Endothelial cell of umbilical vein (primary cell): ENCODE measurements at regions of chr21 and their contacts with region 1.

Region 1: GRCh38 chr21:33360881-33361602 is 36.3 kb downstream of the IFNAR1 start:
- DNase-seq: peak; percentile 77
- H3K4me3 ChIP-seq: no peak overlapping the region
- H3K27ac ChIP-seq: no peak overlapping the region
- H3K4me1 ChIP-seq: peaks cover 16% of the 10 kb centered on the region
- H3K27me3 ChIP-seq: no peaks in the 10 kb centered on the region
- CTCF ChIP-seq: peak; percentile 82 to 91
- POLR2A ChIP-seq: no peak

Region 2: GRCh38 chr21:33036430-33037162 is 324.4 kb before region 1 on chr21:
- CTCF ChIA-PET with region 1: no interaction called
- POLR2A ChIA-PET with region 1: no interaction called
- dilution Hi-C with region 1: no loop called
- intact Hi-C with region 1: no loop called
- DNase-seq: peak; percentile 79
- H3K4me3 ChIP-seq: no peak overlapping the region
- H3K27ac ChIP-seq: peak overlapping the region; percentile 48
- H3K4me1 ChIP-seq: peaks cover 15% of the 10 kb centered on the region
- H3K27me3 ChIP-seq: peaks cover 30 to 32% of the 10 kb centered on the region in 2 experiments
- CTCF ChIP-seq: no peak
- POLR2A ChIP-seq: no peak

Region 3: GRCh38 chr21:33207449-33208149 is 153.4 kb before region 1 on chr21:
- CTCF ChIA-PET with region 1: interaction called, 10 read pairs
- POLR2A ChIA-PET with region 1: no interaction called
- dilution Hi-C with region 1: no loop called
- intact Hi-C with region 1: no loop called
- DNase-seq: no peak
- H3K4me3 ChIP-seq: no peak overlapping the region
- H3K27ac ChIP-seq: no peak overlapping the region
- H3K4me1 ChIP-seq: no peaks in the 10 kb centered on the region
- H3K27me3 ChIP-seq: no peaks in the 10 kb centered on the region
- CTCF ChIP-seq: no peak
- POLR2A ChIP-seq: no peak

Region 4: GRCh38 chr21:33330726-33331125 is 30.3 kb before region 1 on chr21:
- CTCF ChIA-PET with region 1: interaction called, 29 read pairs
- POLR2A ChIA-PET with region 1: interaction called, 5 read pairs
- dilution Hi-C with region 1: no loop called
- intact Hi-C with region 1: loop called (anchors 1 kb)
- DNase-seq: no peak
- H3K4me3 ChIP-seq: no peak overlapping the region
- H3K27ac ChIP-seq: no peak overlapping the region
- H3K4me1 ChIP-seq: peaks cover 5% of the 10 kb centered on the region
- H3K27me3 ChIP-seq: no peaks in the 10 kb centered on the region
- CTCF ChIP-seq: no peak
- POLR2A ChIP-seq: no peak

Region 5: GRCh38 chr21:33374450-33375096 is 13.5 kb after region 1 on chr21:
- CTCF ChIA-PET with region 1: interaction called, 24 read pairs
- POLR2A ChIA-PET with region 1: no interaction called
- dilution Hi-C with region 1: no loop called
- intact Hi-C with region 1: no loop called
- DNase-seq: peak; percentile 84
- H3K4me3 ChIP-seq: no peak overlapping the region
- H3K27ac ChIP-seq: no peak overlapping the region
- H3K4me1 ChIP-seq: peaks cover 15% of the 10 kb centered on the region
- H3K27me3 ChIP-seq: no peaks in the 10 kb centered on the region
- CTCF ChIP-seq: peak; percentile 54 to 60
- POLR2A ChIP-seq: no peak

Region 6: GRCh38 chr21:33403779-33404585 is 42.9 kb after region 1 on chr21:
- CTCF ChIA-PET with region 1: interaction called, 10 read pairs
- POLR2A ChIA-PET with region 1: no interaction called
- dilution Hi-C with region 1: no loop called
- intact Hi-C with region 1: loop called (anchors 2 kb)
- DNase-seq: peak; percentile 44
- H3K4me3 ChIP-seq: peak overlapping the region; percentile 9 to 95 (median 49)
- H3K27ac ChIP-seq: no peak overlapping the region
- H3K4me1 ChIP-seq: peaks cover 7% of the 10 kb centered on the region
- H3K27me3 ChIP-seq: no peaks in the 10 kb centered on the region
- CTCF ChIP-seq: no peak
- POLR2A ChIP-seq: no peak

Region 7: DNA sequence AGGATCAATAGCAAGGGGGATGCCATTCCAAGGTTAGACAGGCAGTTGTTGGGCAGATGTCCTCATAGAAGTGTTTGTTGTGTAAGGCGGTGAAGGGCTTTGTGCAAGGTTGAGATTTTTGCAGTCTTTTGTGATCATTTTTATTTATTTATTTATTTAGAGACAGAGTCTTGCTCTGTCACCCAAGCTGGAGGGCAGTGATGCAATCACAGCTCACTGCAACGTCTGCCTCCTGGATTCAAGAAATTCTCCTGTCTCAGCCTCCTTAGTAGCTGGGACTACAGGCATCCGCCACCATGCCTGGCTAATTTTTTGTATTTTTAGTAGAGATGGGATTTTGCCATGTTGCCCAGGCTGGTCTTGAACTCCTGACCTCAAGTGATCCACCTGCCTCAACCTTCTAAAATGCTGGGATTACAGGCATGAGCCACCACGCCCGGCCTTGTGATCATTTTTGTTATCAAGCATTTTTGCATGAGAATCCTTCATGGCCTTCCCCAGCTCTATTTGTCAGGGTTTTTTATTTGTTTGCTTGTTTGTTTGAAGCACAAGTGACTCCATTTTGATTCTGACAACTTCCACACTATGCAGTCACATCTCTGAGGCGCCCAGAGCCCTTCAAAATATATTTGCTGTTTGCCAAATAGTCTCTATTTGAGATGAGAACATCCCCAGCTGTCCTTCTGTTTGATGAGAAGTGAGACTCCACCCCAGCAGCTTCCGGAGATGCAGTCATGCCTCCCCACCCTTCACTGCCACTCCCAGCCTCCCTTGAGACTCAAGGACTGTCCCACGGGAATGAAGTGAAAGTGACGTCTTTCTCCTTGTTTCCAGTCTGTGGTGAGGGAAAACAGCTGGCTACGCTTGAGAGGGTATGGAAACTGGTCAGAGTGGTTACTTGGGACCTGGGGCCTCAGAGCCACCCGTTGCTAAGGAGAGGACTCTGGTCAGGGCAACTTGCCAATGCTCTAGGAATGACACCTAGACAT is 80.7 kb after region 1 on chr21:
- CTCF ChIA-PET with region 1: interaction called, 62 read pairs
- POLR2A ChIA-PET with region 1: no interaction called
- dilution Hi-C with region 1: no loop called
- intact Hi-C with region 1: loop called (anchors 1 kb)
- DNase-seq: no peak
- H3K4me3 ChIP-seq: no peak overlapping the region
- H3K27ac ChIP-seq: no peak overlapping the region
- H3K4me1 ChIP-seq: no peaks in the 10 kb centered on the region
- H3K27me3 ChIP-seq: no peaks in the 10 kb centered on the region
- CTCF ChIP-seq: no peak
- POLR2A ChIP-seq: no peak

Region 8: GRCh38 chr21:34974162-34974981 is 1613.3 kb after region 1 on chr21:
- CTCF ChIA-PET with region 1: no interaction called
- POLR2A ChIA-PET with region 1: no interaction called
- dilution Hi-C with region 1: no loop called
- intact Hi-C with region 1: no loop called
- DNase-seq: no peak
- H3K4me3 ChIP-seq: no peak overlapping the region
- H3K27ac ChIP-seq: no peak overlapping the region
- H3K4me1 ChIP-seq: no peaks in the 10 kb centered on the region
- H3K27me3 ChIP-seq: peaks cover 8 to 13% of the 10 kb centered on the region in 2 experiments
- CTCF ChIP-seq: no peak
- POLR2A ChIP-seq: no peak